ENCODE measurements at regions of chr6 and their contacts with region 1.

Region 1: DNA sequence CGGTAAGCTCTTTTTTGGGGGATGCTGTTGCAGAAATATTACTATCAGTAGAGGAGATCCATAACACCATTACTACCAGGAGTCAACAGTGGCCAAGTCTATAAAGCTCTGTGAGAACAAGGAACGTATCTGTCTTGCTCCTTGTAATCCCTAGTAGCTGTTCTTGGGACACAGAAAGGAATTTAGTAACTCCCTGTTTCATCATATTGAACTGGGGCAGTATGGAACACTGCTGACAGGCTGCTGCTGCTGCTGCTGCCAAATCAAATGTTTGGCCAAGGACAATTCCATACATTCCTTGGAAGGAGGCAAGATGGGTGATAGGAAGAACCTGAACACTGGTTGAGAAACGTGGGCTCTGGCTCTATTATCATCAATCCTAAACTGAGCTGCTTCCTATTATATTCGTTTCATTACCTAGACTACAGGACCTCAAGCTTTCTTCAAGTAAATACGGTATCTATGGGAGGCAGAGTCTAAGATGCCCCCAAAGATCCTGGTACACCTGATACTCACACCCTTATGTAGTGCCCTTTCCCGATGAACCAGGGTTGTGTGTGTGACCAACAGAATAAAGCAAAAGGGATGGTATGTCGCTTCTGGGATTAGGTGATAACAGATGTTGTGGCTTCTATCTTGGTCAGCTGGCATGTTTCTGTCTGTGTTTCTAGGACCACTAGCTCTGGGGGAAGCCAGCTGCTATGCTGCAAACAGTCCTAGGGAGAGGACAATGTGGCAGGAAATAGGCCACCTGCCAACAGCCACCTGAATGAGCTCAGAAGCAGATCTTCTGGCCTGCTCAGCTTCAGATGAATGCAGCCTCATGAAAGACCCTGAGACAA is 39.5 kb downstream of the ELOVL5 start:
- DNase-seq: no peak
- H3K4me3 Mint-ChIP-seq: no peak overlapping the region
- H3K27ac Mint-ChIP-seq: no peak overlapping the region
- H3K4me1 Mint-ChIP-seq: peaks cover 80% of the 10 kb centered on the region
- H3K27me3 Mint-ChIP-seq: no peaks in the 10 kb centered on the region

Region 2: DNA sequence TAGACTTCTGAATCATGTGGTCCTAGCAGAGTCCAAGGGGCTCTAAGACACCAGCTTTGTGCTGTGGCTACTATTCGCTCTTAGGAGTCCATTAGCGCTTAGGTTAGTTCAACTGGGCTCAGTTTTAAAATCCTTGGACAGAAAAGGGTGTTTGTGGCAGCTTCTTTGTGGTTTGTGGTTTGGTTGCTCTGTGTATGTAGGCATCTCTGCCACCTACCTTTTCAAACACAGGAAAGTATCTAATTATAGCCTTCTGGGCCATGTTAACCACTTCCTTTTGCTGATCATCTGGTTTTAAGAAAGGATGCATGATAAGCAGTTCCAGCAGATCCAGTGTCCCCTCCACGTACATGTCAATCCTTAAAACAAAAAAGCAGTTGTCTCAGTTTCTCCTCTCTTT is 325.0 kb before region 1 on chr6:
- CTCF ChIA-PET with region 1: no interaction called
- intact Hi-C with region 1: loop called (anchors 5 kb)
- DNase-seq: peak; percentile 81
- H3K4me3 Mint-ChIP-seq: no peak overlapping the region
- H3K27ac Mint-ChIP-seq: peak overlapping the region; percentile 82
- H3K4me1 Mint-ChIP-seq: peaks cover 63% of the 10 kb centered on the region
- H3K27me3 Mint-ChIP-seq: peaks cover 8% of the 10 kb centered on the region

Region 3: DNA sequence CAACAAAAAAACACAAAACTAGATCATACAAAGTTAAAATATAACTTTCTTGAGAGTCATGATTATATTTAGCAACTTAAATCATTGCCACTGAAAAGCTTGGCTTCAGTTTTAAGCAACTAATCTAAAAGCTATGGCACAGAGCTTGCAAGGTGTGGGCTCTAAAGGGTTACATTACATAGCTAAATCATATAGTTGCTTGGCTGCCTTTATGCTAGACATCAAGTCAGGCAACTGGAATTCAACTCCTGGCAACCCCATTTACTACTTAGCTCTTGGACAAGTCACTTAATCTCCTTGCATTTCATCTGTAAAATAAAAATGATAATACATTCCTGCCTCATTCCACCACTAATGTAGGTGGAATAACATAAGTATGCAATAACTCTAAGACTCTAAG is 119.7 kb before region 1 on chr6:
- CTCF ChIA-PET with region 1: no interaction called
- intact Hi-C with region 1: loop called (anchors 2 kb)
- DNase-seq: no peak
- H3K4me3 Mint-ChIP-seq: no peak overlapping the region
- H3K27ac Mint-ChIP-seq: no peak overlapping the region
- H3K4me1 Mint-ChIP-seq: peaks cover 14% of the 10 kb centered on the region
- H3K27me3 Mint-ChIP-seq: no peaks in the 10 kb centered on the region

Region 4: GRCh38 chr6:53335208-53335994 is 26.1 kb after region 1 on chr6:
- CTCF ChIA-PET with region 1: interaction called, 4 read pairs
- intact Hi-C with region 1: loop called (anchors 1 kb)
- DNase-seq: peak; percentile 79
- H3K4me3 Mint-ChIP-seq: peak overlapping the region; percentile 80
- H3K27ac Mint-ChIP-seq: peak overlapping the region; percentile 99
- H3K4me1 Mint-ChIP-seq: peaks cover 85% of the 10 kb centered on the region
- H3K27me3 Mint-ChIP-seq: no peaks in the 10 kb centered on the region

Region 5: GRCh38 chr6:53426667-53427270 is 117.5 kb after region 1 on chr6:
- CTCF ChIA-PET with region 1: no interaction called
- intact Hi-C with region 1: loop called (anchors 1 kb)
- DNase-seq: no peak
- H3K4me3 Mint-ChIP-seq: no peak overlapping the region
- H3K27ac Mint-ChIP-seq: no peak overlapping the region
- H3K4me1 Mint-ChIP-seq: peaks cover 34% of the 10 kb centered on the region
- H3K27me3 Mint-ChIP-seq: peaks cover 14% of the 10 kb centered on the region

Region 6: GRCh38 chr6:53794720-53795253 is 485.5 kb after region 1 on chr6 and contains the start of gene LRRC1:
- CTCF ChIA-PET with region 1: no interaction called
- intact Hi-C with region 1: loop called (anchors 10 kb)
- DNase-seq: peak; percentile 82
- H3K4me3 Mint-ChIP-seq: peak within 1 kb of the TSS; percentile 95
- H3K27ac Mint-ChIP-seq: peak within 1 kb of the TSS; percentile 62
- H3K4me1 Mint-ChIP-seq: peaks cover 10% of the 10 kb centered on the region
- H3K27me3 Mint-ChIP-seq: peaks cover 19% of the 10 kb centered on the region
- total RNA-seq, gene LRRC1: 2.3 to 2.9 TPM